ENCODE measurements at regions of chr12 and their contacts with region 1.

Region 1: GRCh38 chr12:56084958-56085543 is 5.1 kb downstream of the ERBB3 start:
- DNase-seq: peak; percentile 67
- ATAC-seq: peak; percentile 64
- H3K4me3 Mint-ChIP-seq: no peak overlapping the region
- H3K27ac Mint-ChIP-seq: no peak overlapping the region
- H3K4me1 Mint-ChIP-seq: peaks cover 8% of the 10 kb centered on the region
- H3K27me3 Mint-ChIP-seq: peaks cover 25% of the 10 kb centered on the region

Region 2: GRCh38 chr12:56041552-56042429 is 43.3 kb before region 1 on chr12 and contains the start of gene RPS26:
- CTCF ChIA-PET with region 1: interaction called, 15 read pairs
- DNase-seq: peak; percentile 97
- ATAC-seq: peak; percentile 91
- H3K4me3 Mint-ChIP-seq: peak within 1 kb of the TSS; percentile 93
- H3K27ac Mint-ChIP-seq: peak within 1 kb of the TSS; percentile 97
- H3K4me1 Mint-ChIP-seq: peaks cover 53% of the 10 kb centered on the region
- H3K27me3 Mint-ChIP-seq: no peaks in the 10 kb centered on the region
- total RNA-seq, gene RPS26: 27.9 to 42.2 TPM

Measured in activated CD8-positive, alpha-beta memory T cell treated with anti-CD3 and anti-CD28 coated beads, Interleukin-2, amount 10 ng/mL, durations not matched to agents 7 days and 5 days (primary cell).